Activated naive CD4-positive, alpha-beta T cell treated with anti-CD3 and anti-CD28 coated beads, Interleukin-2, amount 10 ng/mL, durations not matched to agents 7 days and 5 days (primary cell): ENCODE measurements at regions of chr19 and their contacts with region 1.

Region 1: DNA sequence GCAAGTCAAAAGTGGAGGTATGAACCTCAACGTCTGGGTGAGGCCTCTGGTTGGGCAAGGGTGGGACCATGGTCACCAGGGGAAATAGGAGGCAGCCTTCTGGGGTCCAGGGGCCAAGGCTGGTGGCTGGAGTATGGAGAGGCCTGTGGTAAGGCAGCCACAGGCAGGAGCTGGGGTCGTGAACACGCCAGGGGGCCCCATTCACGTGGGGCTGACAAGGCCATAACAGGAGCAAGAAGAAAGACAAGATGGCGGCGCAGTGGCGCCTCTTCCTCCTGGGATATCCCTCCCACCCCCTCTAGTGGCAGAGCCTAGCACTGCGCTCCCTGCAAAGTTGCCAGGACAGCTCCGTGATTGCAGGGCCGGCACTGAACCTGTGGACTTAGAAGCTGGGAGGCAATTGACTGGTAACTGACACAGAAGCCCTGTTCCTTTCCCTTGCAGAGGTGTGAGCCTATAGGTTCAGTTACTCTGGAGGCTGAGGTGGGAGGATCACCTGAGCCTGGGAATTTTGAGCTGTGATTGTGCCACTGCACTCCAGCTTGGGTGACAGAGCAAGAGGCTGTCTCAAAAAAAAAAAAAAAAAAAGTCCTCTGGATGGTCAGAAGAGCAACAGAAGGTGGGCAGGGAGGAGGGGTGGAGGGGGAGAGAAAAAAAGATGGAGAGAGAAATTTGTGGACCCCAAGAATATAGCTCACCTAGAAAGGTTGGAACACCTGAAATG is 19.7 kb upstream of the EDDM13 start:
- DNase-seq: peak; percentile 84
- H3K4me3 Mint-ChIP-seq: no peak overlapping the region
- H3K27ac Mint-ChIP-seq: no peak overlapping the region
- H3K4me1 Mint-ChIP-seq: no peaks in the 10 kb centered on the region
- H3K27me3 Mint-ChIP-seq: peaks cover 4% of the 10 kb centered on the region

Region 2: GRCh38 chr19:56080669-56081401 is 172.0 kb before region 1 on chr19:
- CTCF ChIA-PET with region 1: interaction called, 25 read pairs
- DNase-seq: peak; percentile 84
- H3K4me3 Mint-ChIP-seq: peak overlapping the region; percentile 68
- H3K27ac Mint-ChIP-seq: no peak overlapping the region
- H3K4me1 Mint-ChIP-seq: peaks cover 10% of the 10 kb centered on the region
- H3K27me3 Mint-ChIP-seq: peaks cover 15% of the 10 kb centered on the region

Region 3: GRCh38 chr19:56199686-56200085 is 53.2 kb before region 1 on chr19:
- CTCF ChIA-PET with region 1: no interaction called
- DNase-seq: no peak
- H3K4me3 Mint-ChIP-seq: no peak overlapping the region
- H3K27ac Mint-ChIP-seq: no peak overlapping the region
- H3K4me1 Mint-ChIP-seq: no peaks in the 10 kb centered on the region
- H3K27me3 Mint-ChIP-seq: peaks cover 4% of the 10 kb centered on the region

Region 4: GRCh38 chr19:56263319-56263718 is 10.5 kb after region 1 on chr19:
- CTCF ChIA-PET with region 1: interaction called, 14 read pairs
- DNase-seq: no peak
- H3K4me3 Mint-ChIP-seq: no peak overlapping the region
- H3K27ac Mint-ChIP-seq: no peak overlapping the region
- H3K4me1 Mint-ChIP-seq: no peaks in the 10 kb centered on the region
- H3K27me3 Mint-ChIP-seq: no peaks in the 10 kb centered on the region

Region 5: DNA sequence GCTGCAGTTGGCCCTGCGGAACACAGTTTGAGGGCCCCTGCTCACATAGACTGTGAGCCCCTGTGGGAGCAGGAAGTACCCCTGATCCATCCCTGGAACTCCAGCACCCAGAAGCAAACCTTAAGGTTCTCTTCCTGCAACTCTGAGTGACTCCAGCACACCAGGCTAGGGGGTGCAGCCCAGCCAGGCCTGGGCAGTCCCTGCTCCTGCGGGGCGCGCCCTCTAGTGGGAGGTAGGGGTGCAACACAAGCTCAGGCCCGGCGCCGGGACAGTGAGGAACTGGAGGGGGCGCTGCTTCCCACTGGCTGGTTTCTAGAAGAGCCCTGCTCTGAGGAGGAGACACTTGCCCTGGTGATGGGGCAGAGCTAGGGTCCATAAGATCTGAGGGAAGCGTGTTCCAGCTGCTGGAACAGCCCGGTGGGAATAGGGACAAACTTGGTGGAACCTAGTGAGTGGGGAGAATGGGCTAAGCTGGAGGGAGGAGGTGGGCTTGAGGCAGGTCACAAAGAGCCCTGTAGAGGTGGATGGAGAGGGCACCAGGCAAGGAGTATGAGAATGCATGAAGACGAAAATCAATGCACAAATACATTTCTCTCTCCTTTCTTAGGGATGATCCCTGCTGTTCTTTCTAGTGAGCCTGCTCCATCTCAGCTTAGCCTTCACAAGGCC is 56.8 kb after region 1 on chr19:
- CTCF ChIA-PET with region 1: interaction called, 15 read pairs
- DNase-seq: peak; percentile 66
- H3K4me3 Mint-ChIP-seq: no peak overlapping the region
- H3K27ac Mint-ChIP-seq: no peak overlapping the region
- H3K4me1 Mint-ChIP-seq: peaks cover 30% of the 10 kb centered on the region
- H3K27me3 Mint-ChIP-seq: no peaks in the 10 kb centered on the region

Region 6: DNA sequence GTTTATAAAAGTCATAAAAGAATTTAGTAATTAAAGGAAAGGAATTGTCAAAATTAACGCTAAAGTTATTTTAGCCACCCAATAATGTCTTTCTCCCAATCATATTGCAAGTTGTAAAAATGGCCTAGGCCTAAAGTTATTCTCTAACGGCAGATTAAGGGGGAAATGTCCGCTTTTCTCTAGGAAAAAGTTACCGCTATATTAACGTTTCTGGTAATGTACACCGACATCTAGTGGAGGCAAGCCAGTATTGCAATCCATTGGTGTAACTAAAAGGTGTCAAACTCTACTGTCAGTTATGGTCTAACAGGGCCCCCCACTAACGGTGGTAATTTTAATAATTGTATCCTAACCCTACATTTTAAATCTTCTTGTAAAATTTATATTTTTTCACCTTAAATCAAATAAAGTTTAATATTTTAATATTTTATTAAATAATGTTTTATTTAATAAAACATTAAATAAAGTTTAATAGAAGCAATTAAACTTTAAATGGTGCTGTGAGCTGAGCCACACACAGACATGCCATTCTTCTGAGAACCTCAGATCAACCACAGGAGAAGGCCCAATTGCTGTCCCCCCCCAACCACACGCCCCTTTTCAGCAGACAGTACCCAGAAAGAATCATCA is 97.7 kb after region 1 on chr19:
- CTCF ChIA-PET with region 1: interaction called, 17 read pairs
- DNase-seq: peak; percentile 66
- H3K4me3 Mint-ChIP-seq: no peak overlapping the region
- H3K27ac Mint-ChIP-seq: no peak overlapping the region
- H3K4me1 Mint-ChIP-seq: no peaks in the 10 kb centered on the region
- H3K27me3 Mint-ChIP-seq: no peaks in the 10 kb centered on the region